Psoas muscle (tissue), 8 donors: ENCODE measurements at regions of chr4 and their contacts with region 1.

Region 1: GRCh38 chr4:123396307-123397143 is at the start of gene SPRY1:
- DNase-seq: peak; percentile 87 to 91
- ATAC-seq: peak; percentile 65 to 77 (median 71)
- H3K4me3 ChIP-seq: peak within 1 kb of the TSS; percentile 84
- H3K27ac ChIP-seq: peak within 1 kb of the TSS; percentile 98
- H3K4me1 ChIP-seq: no peaks in the 10 kb centered on the region
- H3K27me3 ChIP-seq: no peaks in the 10 kb centered on the region
- CTCF ChIP-seq: no peak
- total RNA-seq, gene SPRY1: 41.1 to 104 (median 96.9) TPM

Region 2: DNA sequence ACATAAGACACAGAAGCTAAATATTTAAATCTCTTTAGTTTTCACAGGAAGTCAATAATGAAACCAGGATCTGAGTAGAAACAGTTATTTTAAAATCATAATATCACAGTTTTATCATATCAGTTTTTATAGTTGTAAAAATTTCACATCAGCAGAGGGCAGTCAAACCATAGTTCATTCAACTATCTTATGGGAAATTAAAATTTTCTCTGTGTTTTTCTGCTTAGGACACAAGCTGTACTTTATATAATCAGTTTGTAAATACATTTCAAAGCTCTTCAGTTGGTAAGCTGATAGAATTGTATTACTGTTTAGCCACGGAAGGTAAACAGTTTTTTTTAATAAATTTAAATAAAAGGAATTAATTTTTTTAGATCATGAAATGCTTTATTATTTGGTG is 269.3 kb before region 1 on chr4:
- intact Hi-C with region 1: loop called in 1 of 2 experiments (anchors 5 kb)
- DNase-seq: no peak
- ATAC-seq: no peak
- H3K4me3 ChIP-seq: no peak overlapping the region
- H3K27ac ChIP-seq: no peak overlapping the region
- H3K4me1 ChIP-seq: no peaks in the 10 kb centered on the region
- H3K27me3 ChIP-seq: no peaks in the 10 kb centered on the region
- CTCF ChIP-seq: peak; percentile 37

Region 3: DNA sequence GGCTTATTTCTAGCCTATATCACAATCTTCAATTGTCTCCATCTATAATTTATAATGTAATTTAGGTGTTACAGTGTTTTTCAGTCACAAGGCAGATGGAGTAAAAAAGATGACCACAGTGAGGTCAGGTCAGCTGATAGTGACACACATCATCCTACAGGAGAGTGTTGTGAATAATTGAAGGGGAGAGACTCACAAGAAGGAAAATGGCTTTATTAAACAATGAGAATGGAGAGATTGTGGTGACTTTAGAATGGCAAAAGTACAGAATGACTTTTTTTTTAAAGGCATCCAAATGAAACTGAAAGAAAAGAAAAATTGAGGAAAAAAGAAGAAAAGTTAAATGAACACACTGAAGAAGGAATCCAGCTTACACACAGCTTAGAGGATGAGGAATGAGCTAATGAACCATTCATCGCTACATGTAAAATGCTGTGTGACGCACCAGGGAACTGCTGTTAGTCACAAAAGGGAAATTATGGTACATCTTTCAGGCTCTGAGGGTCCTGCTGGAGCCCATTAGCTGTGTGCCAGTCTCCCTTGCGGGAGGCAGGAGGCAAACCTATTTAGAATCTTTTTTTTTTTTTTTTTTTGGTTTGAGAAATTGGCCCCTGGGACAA is 56.6 kb after region 1 on chr4:
- intact Hi-C with region 1: no loop called
- DNase-seq: no peak
- ATAC-seq: peak in 1 of 4 donors; percentile 54
- H3K4me3 ChIP-seq: no peak overlapping the region
- H3K27ac ChIP-seq: peak overlapping the region; percentile 36
- H3K4me1 ChIP-seq: peaks cover 8% of the 10 kb centered on the region
- H3K27me3 ChIP-seq: no peaks in the 10 kb centered on the region
- CTCF ChIP-seq: no peak

Region 4: DNA sequence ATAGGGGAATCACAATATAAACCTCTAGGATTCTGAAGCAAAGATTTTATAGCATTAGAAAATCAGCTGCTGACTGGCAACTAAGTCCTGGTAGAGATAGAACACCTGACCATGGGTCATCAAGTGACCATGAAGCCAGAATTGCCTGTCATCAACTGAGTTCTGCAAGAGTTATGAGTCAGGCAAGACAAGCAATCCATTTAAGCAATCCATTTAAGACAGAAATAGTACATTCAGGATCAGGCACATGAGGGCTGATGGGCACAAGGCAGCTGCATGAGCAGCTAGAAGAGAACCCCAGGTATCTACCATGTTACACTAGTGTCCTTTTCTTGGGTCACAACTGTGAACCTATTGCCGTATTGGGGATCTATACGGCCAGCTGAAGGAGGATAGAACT is 99.0 kb after region 1 on chr4:
- intact Hi-C with region 1: loop called in 1 of 2 experiments (anchors 5 kb)
- DNase-seq: peak; percentile 21 to 63
- ATAC-seq: peak; percentile 98 to 99 (median 99)
- H3K4me3 ChIP-seq: no peak overlapping the region
- H3K27ac ChIP-seq: peak overlapping the region; percentile 79
- H3K4me1 ChIP-seq: peaks cover 13% of the 10 kb centered on the region
- H3K27me3 ChIP-seq: no peaks in the 10 kb centered on the region
- CTCF ChIP-seq: no peak

Region 5: GRCh38 chr4:123588631-123589241 is 192.2 kb after region 1 on chr4:
- intact Hi-C with region 1: loop called in 1 of 2 experiments (anchors 2 kb)
- DNase-seq: peak in 1 of 2 donors; percentile 50
- ATAC-seq: peak; percentile 87 to 93 (median 91)
- H3K4me3 ChIP-seq: peak overlapping the region; percentile 26
- H3K27ac ChIP-seq: peak overlapping the region; percentile 96
- H3K4me1 ChIP-seq: peaks cover 13% of the 10 kb centered on the region
- H3K27me3 ChIP-seq: no peaks in the 10 kb centered on the region
- CTCF ChIP-seq: no peak

Region 6: GRCh38 chr4:123676890-123677229 is 280.3 kb after region 1 on chr4:
- intact Hi-C with region 1: loop called in 1 of 2 experiments (anchors 5 kb)
- DNase-seq: peak in 1 of 2 donors; percentile 24
- ATAC-seq: peak; percentile 76 to 91 (median 91)
- H3K4me3 ChIP-seq: peak overlapping the region; percentile 46
- H3K27ac ChIP-seq: no peak overlapping the region
- H3K4me1 ChIP-seq: peaks cover 19% of the 10 kb centered on the region
- H3K27me3 ChIP-seq: no peaks in the 10 kb centered on the region
- CTCF ChIP-seq: no peak

Region 7: DNA sequence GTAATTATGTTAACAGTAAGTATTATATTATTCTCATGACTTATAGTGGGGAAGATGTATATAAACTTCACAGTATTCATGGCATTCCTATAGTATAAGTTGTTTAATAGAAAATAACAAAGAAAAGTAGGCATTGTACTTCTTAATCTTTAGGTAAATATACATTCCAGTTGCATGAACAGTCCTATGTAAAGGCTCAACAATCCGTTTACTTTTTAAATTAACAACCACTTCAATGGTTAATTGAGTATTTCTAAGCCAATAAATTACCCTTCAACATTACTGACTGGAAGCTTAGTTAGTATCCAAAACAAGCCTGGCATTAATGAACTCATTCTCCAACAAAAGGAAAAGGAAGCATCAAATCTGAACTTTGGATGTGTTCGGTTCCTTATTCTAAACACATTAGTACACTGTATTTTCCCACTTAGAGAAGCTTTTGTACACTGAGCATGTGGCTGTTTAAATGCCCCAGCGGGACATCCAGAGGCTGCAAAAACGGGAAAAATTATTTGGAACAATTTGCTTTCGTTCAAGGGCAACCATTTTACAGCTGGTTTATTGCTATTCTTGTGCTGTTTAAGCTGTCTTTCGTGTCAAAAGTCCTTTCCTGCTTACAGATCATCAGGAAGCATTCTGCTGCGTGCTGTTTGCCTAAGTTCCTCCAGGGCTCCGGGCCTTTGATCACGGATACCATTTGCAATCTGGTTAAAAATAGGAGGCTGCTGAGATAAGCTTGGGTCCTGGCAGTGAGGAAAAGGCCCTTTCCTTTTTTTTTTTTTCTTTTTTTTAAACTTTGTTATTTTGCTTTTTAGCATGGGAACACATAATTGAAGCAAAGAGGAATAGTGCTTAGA is 460.4 kb after region 1 on chr4:
- intact Hi-C with region 1: loop called in 1 of 2 experiments (anchors 5 kb)
- DNase-seq: peak in 1 of 2 donors; percentile 57
- ATAC-seq: peak; percentile 82 to 94 (median 88)
- H3K4me3 ChIP-seq: peak overlapping the region; percentile 47
- H3K27ac ChIP-seq: peak overlapping the region; percentile 72
- H3K4me1 ChIP-seq: peaks cover 23% of the 10 kb centered on the region
- H3K27me3 ChIP-seq: no peaks in the 10 kb centered on the region
- CTCF ChIP-seq: peak; percentile 29